ENCODE measurements at regions of chr17 and their contacts with region 1.

Region 1: GRCh38 chr17:1331708-1332107 is 52.2 kb downstream of the TRARG1 start:
- DNase-seq: peak; percentile 49
- H3K4me3 Mint-ChIP-seq: no peak overlapping the region
- H3K27ac Mint-ChIP-seq: no peak overlapping the region
- H3K4me1 Mint-ChIP-seq: peaks cover 14% of the 10 kb centered on the region
- H3K27me3 Mint-ChIP-seq: no peaks in the 10 kb centered on the region

Region 2: DNA sequence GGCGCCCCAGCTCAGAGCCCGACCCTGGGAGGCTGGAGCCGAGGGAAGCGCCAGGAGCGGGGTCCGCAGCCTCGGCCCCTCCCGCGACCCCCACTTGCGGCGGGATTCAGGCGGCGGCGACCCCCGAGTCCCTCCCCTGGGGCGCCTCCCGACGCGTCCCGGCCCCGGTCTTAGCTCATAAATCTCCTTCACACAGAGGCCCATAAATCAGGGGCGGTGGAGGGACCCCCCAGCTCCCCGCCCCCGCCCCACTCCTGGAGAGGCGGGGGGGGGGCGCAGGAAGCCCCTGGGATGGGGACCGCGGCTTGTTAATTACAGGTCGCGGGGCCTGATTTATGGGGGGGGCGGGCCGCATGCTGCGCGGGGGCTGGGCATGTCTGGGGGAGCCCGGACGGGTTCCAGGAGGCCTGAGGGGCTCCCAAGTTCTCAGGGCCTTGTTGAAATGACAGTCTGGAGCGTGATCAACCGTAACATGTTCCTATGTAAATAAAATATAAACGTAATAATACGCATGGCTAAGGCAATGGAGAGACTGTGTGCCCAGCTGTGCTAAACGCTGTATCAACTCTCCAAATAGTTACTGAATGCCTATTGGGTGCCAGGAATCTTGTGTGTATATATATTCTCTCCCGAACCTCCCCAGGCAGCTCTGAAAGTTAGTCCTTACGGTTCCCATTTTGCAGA is 71.5 kb before region 1 on chr17:
- CTCF ChIA-PET with region 1: interaction called, 7 read pairs
- intact Hi-C with region 1: loop called (anchors 1 kb)
- DNase-seq: no peak
- H3K4me3 Mint-ChIP-seq: no peak overlapping the region
- H3K27ac Mint-ChIP-seq: no peak overlapping the region
- H3K4me1 Mint-ChIP-seq: peaks cover 3% of the 10 kb centered on the region
- H3K27me3 Mint-ChIP-seq: peaks cover 5% of the 10 kb centered on the region

Region 3: GRCh38 chr17:1275962-1276736 is 55.6 kb before region 1 on chr17:
- CTCF ChIA-PET with region 1: interaction called, 13 read pairs
- intact Hi-C with region 1: loop called (anchors 1 kb)
- DNase-seq: peak; percentile 79
- H3K4me3 Mint-ChIP-seq: no peak overlapping the region
- H3K27ac Mint-ChIP-seq: no peak overlapping the region
- H3K4me1 Mint-ChIP-seq: peaks cover 5% of the 10 kb centered on the region
- H3K27me3 Mint-ChIP-seq: peaks cover 33% of the 10 kb centered on the region

Region 4: DNA sequence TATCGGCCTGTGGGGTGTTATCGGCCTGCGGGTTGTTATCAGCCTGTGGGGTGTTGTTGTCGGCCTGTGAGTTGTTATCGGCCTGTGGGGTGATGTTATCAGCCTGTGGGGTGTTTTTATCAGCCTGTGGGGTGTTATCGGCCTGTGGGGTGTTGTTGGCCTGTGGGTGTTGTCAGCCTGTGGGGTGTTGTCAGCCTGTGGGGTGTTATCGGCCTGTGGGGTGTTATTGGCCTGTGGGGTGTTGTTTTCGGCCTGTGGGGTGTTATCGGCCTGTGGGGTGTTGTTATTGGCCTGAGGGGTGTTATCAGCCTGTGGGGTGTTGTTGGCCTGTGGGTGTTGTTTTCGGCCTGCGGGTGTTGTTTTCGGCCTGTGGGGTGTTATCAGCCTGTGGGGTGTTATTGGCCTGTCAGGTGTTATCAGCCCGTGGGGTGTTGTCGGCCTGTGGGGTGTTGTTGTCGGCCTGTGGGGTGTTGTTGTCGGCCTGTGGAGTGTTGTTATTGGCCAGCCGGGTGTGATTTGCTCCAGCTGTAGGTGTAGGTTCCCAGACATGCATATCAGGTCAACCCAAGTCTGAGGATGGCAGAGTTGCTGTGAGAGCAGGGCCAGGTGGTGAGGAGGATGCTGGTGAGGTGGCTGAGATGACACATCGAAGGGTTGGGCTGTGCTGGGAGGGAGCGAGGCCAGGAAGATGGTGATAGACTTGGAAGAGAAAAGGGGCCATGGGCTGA is 45.2 kb before region 1 on chr17:
- CTCF ChIA-PET with region 1: no interaction called
- intact Hi-C with region 1: no loop called
- DNase-seq: no peak
- H3K4me3 Mint-ChIP-seq: no peak overlapping the region
- H3K27ac Mint-ChIP-seq: no peak overlapping the region
- H3K4me1 Mint-ChIP-seq: no peaks in the 10 kb centered on the region
- H3K27me3 Mint-ChIP-seq: no peaks in the 10 kb centered on the region

Region 5: DNA sequence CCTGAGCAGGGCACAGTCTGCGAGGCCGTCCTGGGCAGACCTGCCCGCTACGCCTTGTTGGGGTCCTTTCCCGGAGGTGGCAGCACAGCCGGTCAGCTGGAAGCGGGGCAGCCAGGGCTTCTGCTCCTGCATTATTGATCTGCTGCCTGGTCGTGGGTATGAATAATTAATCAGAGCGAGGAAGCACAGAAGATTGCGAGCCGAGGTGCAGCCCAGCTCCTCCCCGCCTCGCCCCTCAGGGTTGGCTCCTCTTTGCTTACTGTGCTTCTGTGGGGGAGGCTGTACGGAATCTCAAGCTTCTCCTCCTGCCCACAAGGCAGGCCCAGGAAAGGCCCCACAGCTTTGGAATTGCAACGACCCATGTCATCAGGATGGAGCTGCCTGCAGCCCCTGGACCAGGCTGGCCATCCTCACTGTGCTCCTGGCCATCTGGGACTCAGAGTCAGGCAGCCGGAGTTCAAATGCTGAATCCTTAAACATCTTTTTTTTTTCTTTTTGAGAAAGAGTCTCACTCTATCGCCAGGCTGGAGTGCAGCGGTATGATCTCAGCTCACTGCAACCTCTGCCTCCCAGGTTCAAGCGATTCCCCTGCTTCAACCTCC is 26.6 kb before region 1 on chr17:
- CTCF ChIA-PET with region 1: no interaction called
- intact Hi-C with region 1: no loop called
- DNase-seq: no peak
- H3K4me3 Mint-ChIP-seq: no peak overlapping the region
- H3K27ac Mint-ChIP-seq: no peak overlapping the region
- H3K4me1 Mint-ChIP-seq: no peaks in the 10 kb centered on the region
- H3K27me3 Mint-ChIP-seq: peaks cover 3% of the 10 kb centered on the region

Region 6: DNA sequence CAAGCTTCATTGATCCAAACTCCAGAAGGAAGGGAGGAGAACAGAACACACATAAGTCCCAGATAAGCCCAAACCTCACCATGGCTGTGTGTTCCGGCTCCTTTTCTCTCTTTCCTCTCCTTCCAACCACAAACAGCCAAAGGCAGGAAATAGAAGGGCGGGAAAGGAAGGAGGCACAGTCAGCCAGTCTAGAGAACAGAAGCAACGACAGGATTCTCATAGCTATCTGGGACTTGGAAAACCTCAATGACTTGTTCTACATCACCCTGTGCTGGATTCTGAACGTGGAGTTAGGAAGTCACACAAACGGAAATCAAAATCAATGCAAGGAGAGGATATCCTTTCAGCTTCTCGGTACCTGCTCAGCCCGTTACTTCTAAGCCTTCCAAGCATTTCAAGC is 115.3 kb after region 1 on chr17:
- CTCF ChIA-PET with region 1: no interaction called
- intact Hi-C with region 1: no loop called
- DNase-seq: no peak
- H3K4me3 Mint-ChIP-seq: no peak overlapping the region
- H3K27ac Mint-ChIP-seq: no peak overlapping the region
- H3K4me1 Mint-ChIP-seq: peaks cover 38% of the 10 kb centered on the region
- H3K27me3 Mint-ChIP-seq: no peaks in the 10 kb centered on the region

Region 7: DNA sequence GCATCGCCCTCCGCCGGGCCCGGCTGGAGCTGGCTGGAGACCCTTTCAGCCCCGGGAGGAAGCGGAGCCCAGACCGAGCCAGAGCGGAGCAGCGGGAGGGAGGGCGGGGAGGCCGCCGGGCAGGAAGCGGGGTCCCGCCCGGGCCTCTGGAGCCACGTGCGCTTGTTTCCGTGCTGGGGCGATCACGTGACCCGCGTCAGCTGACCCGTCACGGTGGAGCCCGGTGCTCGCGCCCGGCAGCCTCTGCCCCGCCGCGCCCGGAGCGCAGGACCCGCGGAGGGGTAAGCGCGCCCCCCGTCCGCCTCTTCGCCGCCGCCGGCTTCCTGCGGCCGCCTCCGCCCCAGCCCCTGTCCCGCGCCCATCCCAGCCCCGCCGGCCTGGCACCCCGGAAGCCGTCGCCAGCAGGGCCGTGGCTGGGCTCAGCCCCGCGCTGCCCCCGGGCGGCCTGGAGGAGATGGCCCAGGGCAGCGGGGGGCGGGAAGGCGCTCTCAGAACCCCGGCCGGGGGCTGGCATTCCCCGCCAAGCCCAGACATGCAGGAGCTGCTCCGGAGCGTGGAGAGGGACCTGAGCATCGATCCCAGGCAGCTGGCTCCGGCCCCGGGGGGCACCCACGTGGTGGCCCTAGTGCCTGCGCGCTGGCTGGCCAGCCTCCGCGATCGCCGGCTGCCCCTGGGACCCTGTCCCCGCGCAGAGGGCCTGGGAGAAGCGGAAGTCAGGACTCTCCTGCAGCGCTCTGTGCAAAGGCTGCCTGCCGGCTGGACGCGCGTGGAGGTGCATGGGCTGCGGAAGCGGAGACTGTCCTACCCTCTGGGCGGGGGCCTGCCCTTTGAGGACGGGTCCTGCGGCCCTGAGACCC is 393.0 kb after region 1 on chr17 and contains the start of gene WDR81:
- CTCF ChIA-PET with region 1: no interaction called
- intact Hi-C with region 1: no loop called
- DNase-seq: peak; percentile 91
- H3K4me3 Mint-ChIP-seq: peak within 1 kb of the TSS; percentile 69
- H3K27ac Mint-ChIP-seq: peak within 1 kb of the TSS; percentile 41
- H3K4me1 Mint-ChIP-seq: peaks cover 29% of the 10 kb centered on the region
- H3K27me3 Mint-ChIP-seq: no peaks in the 10 kb centered on the region
- total RNA-seq, gene WDR81: 2.9 to 3.7 TPM